MCF 10A (cell line): ENCODE measurements at regions of chr17 and their contacts with region 1.

Region 1: DNA sequence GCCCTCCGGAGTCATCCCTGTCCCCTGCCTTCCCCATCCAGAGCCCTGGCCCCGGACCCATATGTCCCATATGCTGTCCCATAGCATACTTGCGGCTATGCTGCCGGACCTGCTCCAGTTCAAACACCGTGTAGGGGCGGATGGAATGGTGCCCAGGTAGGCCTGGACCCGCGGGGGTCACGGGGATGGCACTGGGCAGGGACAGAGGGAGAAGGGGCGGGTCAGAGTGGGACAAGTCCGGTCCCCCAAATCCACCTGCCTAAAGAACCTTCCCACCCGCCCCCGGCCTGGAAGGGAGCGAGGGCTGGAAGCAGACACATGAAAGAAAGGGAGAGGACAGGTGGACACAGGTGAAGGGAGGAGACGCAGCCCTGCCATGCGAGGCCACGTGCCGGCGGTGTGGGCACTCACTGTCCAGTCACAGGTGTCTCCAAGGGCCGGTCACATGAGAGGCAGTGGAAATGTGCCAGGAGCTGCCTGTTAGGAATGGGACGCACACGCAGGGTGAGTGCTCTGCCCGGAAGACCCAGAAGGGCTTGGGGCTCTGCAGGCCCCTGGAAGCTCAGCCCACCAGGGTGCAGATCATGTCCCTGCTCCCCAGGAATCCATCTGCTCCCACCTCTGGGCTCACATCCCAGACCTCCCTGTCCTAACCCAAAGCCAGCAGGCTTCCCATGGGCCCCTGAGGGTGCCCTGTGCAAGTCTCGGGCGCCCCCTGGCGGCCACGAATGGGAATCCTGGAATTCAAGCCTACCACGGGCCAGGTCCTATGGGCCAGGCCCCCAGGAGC is 14.0 kb downstream of the UBALD2 start:
- DNase-seq: peak; percentile 82
- H3K4me3 Mint-ChIP-seq: no peak overlapping the region
- H3K27ac Mint-ChIP-seq: no peak overlapping the region
- H3K4me1 Mint-ChIP-seq: peaks cover 6% of the 10 kb centered on the region
- H3K27me3 Mint-ChIP-seq: no peaks in the 10 kb centered on the region
- CTCF ChIP-seq: peak; percentile 96

Region 2: GRCh38 chr17:76103274-76104139 is 175.6 kb before region 1 on chr17 and contains the start of gene EXOC7:
- CTCF ChIA-PET with region 1: interaction called, 13 read pairs
- POLR2A ChIA-PET with region 1: no interaction called
- intact Hi-C with region 1: no loop called
- DNase-seq: peak; percentile 93
- H3K4me3 Mint-ChIP-seq: peak within 1 kb of the TSS; percentile 95
- H3K27ac Mint-ChIP-seq: peak within 1 kb of the TSS; percentile 98
- H3K4me1 Mint-ChIP-seq: peaks cover 5% of the 10 kb centered on the region
- H3K27me3 Mint-ChIP-seq: no peaks in the 10 kb centered on the region
- CTCF ChIP-seq: peak; percentile 13
- total RNA-seq, gene EXOC7: 80.8 and 106 TPM in 2 replicates

Region 3: DNA sequence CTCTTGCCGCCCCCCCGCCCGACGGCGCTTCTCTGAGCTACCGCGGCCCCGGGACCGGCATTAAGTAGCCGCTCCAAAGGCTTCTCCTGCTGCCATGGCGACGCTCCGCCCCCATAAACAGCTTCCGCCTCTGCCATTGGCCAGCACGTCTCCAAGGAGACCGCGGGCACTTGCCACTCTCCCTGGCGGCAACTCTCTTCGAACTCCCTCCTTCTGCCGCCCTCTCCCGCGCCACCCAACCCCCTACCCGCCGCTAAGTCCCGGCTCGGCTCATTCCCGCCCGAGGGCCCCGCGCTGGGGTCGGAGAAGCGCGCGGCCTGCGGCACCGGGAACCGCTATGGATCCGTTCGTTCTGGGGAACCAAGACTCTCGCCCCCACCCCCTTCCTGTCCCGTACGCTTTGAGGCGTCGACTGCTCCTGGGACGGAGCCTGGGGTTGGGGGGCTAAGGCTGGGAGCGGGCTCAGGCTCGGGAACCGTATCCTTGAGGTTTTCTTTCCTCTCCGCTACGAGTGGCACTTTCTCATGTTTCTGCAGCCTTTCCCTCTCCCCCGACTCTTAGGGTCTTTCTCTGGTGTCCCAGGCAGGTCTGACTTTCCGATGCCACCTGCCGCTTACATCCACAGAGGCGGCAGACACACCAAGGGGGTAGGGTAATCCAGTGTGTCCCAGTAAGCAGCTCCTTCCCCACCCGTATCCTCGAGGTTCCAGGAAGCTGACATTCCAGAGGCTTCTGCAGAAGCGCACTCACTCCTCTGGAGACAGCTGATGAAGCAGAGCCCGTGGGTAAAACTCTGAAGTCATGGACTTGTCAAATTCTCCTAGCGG is 137.7 kb before region 1 on chr17 and contains the start of gene FOXJ1:
- CTCF ChIA-PET with region 1: interaction called, 13 read pairs
- POLR2A ChIA-PET with region 1: no interaction called
- intact Hi-C with region 1: no loop called
- DNase-seq: peak; percentile 85
- H3K4me3 Mint-ChIP-seq: peak within 1 kb of the TSS; percentile 61
- H3K27ac Mint-ChIP-seq: no peak within 1 kb of the TSS
- H3K4me1 Mint-ChIP-seq: no peaks in the 10 kb centered on the region
- H3K27me3 Mint-ChIP-seq: no peaks in the 10 kb centered on the region
- CTCF ChIP-seq: no peak
- total RNA-seq, gene FOXJ1: not detected in 2 replicates

Region 4: DNA sequence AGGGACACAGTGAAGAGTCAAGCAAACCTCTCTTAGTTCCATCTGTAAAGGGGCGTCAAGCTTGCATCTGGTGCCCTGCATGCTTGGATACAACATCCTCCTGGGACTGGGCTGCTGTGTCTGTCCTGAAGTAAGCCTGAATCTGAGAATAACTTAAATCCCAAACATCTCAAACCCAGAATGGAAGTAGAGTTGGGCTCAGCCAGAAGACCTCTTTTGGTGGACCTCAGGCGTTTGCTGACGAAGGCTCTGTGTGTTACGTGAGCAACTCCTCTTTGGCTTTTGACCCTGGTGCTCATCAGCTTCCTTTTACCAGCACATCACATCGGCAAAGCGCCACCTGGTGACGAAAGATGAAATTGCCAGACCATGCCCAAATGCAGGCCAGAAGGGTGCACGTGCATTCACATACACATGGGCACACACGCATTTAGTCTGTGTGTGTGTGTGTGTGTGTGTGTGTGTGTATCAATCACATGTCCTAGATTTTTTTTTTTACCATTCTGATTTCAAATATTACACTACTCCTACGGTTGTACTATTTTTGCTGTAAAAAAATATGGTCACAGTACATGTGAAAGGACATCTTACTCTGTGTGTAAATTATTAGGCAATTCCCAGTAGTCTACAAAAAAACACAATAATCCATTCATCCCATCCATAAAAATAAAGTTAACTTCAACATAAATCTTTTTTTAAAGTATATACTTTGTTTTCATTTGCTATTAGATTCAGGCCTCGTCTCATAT is 97.0 kb before region 1 on chr17:
- CTCF ChIA-PET with region 1: interaction called, 23 read pairs
- POLR2A ChIA-PET with region 1: interaction called, 3 read pairs
- intact Hi-C with region 1: loop called (anchors 5 kb)
- DNase-seq: peak; percentile 91
- H3K4me3 Mint-ChIP-seq: no peak overlapping the region
- H3K27ac Mint-ChIP-seq: peak overlapping the region; percentile 12
- H3K4me1 Mint-ChIP-seq: no peaks in the 10 kb centered on the region
- H3K27me3 Mint-ChIP-seq: no peaks in the 10 kb centered on the region
- CTCF ChIP-seq: peak; percentile 73

Region 5: DNA sequence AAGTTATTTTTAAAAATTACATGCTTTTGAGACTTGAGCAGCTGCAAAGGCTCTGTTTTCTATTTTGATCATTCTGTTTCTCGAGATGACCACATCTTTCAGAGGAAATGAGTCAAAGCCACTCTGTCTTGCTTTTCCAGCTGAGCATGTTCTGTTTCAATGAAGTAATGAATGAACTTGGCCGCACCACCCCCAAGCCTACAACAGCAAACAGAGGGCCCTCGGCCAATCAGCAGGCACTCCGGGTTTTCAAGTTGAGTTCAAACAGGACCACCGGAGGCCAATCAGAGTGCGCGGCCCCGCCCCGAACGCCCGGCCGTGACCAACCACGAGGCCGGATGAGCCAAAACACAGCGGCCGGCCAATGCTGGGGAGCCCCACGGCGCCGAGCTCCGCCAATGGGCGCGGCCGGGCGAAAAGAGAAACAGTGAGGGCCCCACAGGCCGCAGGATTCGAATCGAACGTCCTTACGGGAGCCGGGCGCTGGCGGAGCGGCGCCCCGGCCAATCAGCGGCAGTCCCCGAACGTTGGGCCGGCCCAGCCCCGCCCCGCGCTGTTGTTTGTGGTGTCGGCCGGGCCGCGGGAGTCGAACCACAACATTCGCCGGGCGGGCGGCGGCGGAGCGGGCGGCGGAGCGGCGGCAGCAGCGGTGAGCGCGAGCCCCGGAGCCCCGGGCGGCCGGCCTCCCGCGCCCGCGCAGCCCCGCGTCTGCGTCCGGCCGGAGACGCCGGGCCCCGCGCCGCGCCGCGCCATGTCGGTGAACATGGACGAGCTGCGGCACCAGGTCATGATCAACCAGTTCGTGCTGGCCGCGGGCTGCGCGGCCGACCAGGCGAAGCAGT is 14.2 kb before region 1 on chr17 and contains the start of gene UBALD2:
- CTCF ChIA-PET with region 1: interaction called, 51 read pairs
- POLR2A ChIA-PET with region 1: interaction called, 11 read pairs
- intact Hi-C with region 1: no loop called
- DNase-seq: peak; percentile 99
- H3K4me3 Mint-ChIP-seq: peak within 1 kb of the TSS; percentile 76
- H3K27ac Mint-ChIP-seq: peak within 1 kb of the TSS; percentile 87
- H3K4me1 Mint-ChIP-seq: peaks cover 7% of the 10 kb centered on the region
- H3K27me3 Mint-ChIP-seq: no peaks in the 10 kb centered on the region
- CTCF ChIP-seq: no peak
- total RNA-seq, gene UBALD2: 84.9 and 109 TPM in 2 replicates